ENCODE measurements at regions of chr3 and their contacts with region 1.

Region 1: GRCh38 chr3:125512135-125512920 is 7.7 kb downstream of the SNX4 start:
- DNase-seq: peak; percentile 83
- H3K4me3 Mint-ChIP-seq: no peak overlapping the region
- H3K27ac Mint-ChIP-seq: peak overlapping the region; percentile 77
- H3K4me1 Mint-ChIP-seq: peaks cover 45% of the 10 kb centered on the region
- H3K27me3 Mint-ChIP-seq: no peaks in the 10 kb centered on the region

Region 2: DNA sequence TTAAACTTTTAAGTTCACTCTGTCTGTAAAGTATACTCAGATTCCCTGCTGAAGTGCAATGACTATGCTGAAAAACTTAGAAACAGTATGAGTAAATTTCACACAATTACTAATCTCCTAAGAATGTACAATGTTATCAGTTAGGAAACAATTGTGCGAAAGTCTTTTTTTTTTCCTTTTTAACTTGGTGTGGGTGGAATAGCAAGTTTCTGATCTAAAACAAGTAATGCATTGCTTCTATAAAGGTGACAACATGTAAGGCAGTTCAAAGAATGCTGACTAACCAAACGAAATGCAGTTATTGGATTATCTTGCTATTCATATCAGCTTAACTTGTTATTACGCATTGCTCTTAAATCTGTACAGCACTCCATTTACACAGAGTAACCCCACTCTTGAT is 280.4 kb before region 1 on chr3:
- CTCF ChIA-PET with region 1: no interaction called
- intact Hi-C with region 1: loop called (anchors 1 kb)
- DNase-seq: no peak
- H3K4me3 Mint-ChIP-seq: no peak overlapping the region
- H3K27ac Mint-ChIP-seq: peak overlapping the region; percentile 36
- H3K4me1 Mint-ChIP-seq: peaks cover 20% of the 10 kb centered on the region
- H3K27me3 Mint-ChIP-seq: no peaks in the 10 kb centered on the region

Region 3: GRCh38 chr3:125437631-125438435 is 74.5 kb before region 1 on chr3:
- CTCF ChIA-PET with region 1: no interaction called
- intact Hi-C with region 1: no loop called
- DNase-seq: peak; percentile 70
- H3K4me3 Mint-ChIP-seq: no peak overlapping the region
- H3K27ac Mint-ChIP-seq: no peak overlapping the region
- H3K4me1 Mint-ChIP-seq: no peaks in the 10 kb centered on the region
- H3K27me3 Mint-ChIP-seq: no peaks in the 10 kb centered on the region